CD8-positive, alpha-beta T cell (primary cell): ENCODE measurements at regions of chr5 and their contacts with region 1.

Region 1: GRCh38 chr5:140362860-140363630 is 3.1 kb downstream of the SLC4A9 start:
- DNase-seq: peak; percentile 63 to 87 (median 83)
- ATAC-seq: peak; percentile 97
- H3K4me3 ChIP-seq: peak overlapping the region; percentile 28 to 35
- H3K4me3 Mint-ChIP-seq: peak overlapping the region; percentile 77
- H3K27ac ChIP-seq: no peak overlapping the region
- H3K27ac Mint-ChIP-seq: no peak overlapping the region
- H3K4me1 ChIP-seq: peaks cover 5% of the 10 kb centered on the region
- H3K4me1 Mint-ChIP-seq: peaks cover 6% of the 10 kb centered on the region
- H3K27me3 ChIP-seq: no peaks in the 10 kb centered on the region
- H3K27me3 Mint-ChIP-seq: peaks cover 8% of the 10 kb centered on the region
- CTCF ChIP-seq: peak; percentile 94

Region 2: GRCh38 chr5:140547508-140548299 is 184.7 kb after region 1 on chr5 and contains the start of gene EIF4EBP3:
- CTCF ChIA-PET with region 1: no interaction called
- POLR2A ChIA-PET with region 1: no interaction called
- intact Hi-C with region 1: no loop called
- DNase-seq: peak; percentile 74 to 94 (median 88)
- ATAC-seq: peak; percentile 97
- H3K4me3 ChIP-seq: peak within 1 kb of the TSS; percentile 69 to 96
- H3K4me3 Mint-ChIP-seq: peak within 1 kb of the TSS; percentile 90
- H3K27ac ChIP-seq: peak within 1 kb of the TSS; percentile 88 to 96
- H3K27ac Mint-ChIP-seq: peak within 1 kb of the TSS; percentile 98
- H3K4me1 ChIP-seq: peaks cover 21% of the 10 kb centered on the region
- H3K4me1 Mint-ChIP-seq: peaks cover 31% of the 10 kb centered on the region
- H3K27me3 ChIP-seq: no peaks in the 10 kb centered on the region
- H3K27me3 Mint-ChIP-seq: no peaks in the 10 kb centered on the region
- CTCF ChIP-seq: peak; percentile 72
- total RNA-seq, gene EIF4EBP3: 10.6 to 13.7 TPM

Region 3: GRCh38 chr5:140725799-140726471 is 362.9 kb after region 1 on chr5:
- CTCF ChIA-PET with region 1: interaction called, 9 read pairs
- POLR2A ChIA-PET with region 1: no interaction called
- intact Hi-C with region 1: loop called (anchors 2 kb)
- DNase-seq: peak; percentile 28 to 80 (median 61)
- ATAC-seq: peak; percentile 92
- H3K4me3 ChIP-seq: peak overlapping the region in 1 of 2 experiments; percentile 17
- H3K4me3 Mint-ChIP-seq: peak overlapping the region; percentile 80
- H3K27ac ChIP-seq: no peak overlapping the region
- H3K27ac Mint-ChIP-seq: peak overlapping the region; percentile 83
- H3K4me1 ChIP-seq: no peaks in the 10 kb centered on the region
- H3K4me1 Mint-ChIP-seq: peaks cover 12% of the 10 kb centered on the region
- H3K27me3 ChIP-seq: no peaks in the 10 kb centered on the region
- H3K27me3 Mint-ChIP-seq: peaks cover 24% of the 10 kb centered on the region
- CTCF ChIP-seq: no peak